B cell (primary cell): ENCODE measurements at regions of chrX and their contacts with region 1.

Region 1: DNA sequence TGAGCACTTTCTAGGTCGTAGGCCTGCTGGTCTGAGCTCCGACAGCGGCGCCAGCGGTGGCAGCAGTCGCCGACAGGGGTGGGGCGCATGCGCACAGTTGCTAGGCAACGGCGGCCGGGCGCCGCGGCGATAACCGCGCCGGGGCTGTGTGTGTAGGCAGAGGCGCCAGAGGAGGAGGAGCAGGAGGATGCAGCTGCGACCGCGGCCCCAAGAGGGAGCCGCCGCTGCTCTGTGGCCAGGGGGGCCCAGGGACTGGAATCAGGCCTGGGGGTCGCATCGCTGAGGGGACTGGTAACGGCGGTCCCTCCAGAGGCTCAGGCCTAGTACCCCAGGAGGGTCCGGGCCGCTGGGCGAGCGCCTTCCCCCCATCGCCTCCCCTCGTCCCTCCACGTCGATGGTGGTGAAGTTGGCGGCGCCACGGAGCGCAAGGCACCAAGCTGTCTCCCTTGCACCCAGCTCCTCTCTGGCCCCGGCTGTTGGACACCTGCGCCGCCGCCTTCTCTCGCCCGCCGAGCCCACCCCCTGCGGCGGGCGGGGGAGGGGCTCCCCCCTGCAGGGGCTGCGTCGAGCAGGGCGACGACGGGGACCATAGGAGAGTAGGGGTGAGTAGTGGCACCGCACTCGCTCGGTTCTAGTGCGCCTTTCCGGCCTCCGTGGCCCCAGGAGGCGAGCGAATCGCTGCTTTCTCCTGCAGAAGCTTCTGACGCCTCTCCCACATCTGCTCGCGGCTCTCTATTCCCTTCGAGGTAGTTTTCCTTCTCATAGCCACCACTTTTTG is 58.6 kb upstream of the ZC4H2 start:
- DNase-seq: peak; percentile 89
- ATAC-seq: peak; percentile 90
- H3K4me3 ChIP-seq: peak within 1 kb of the TSS; percentile 6 to 71 (median 68)
- H3K4me3 Mint-ChIP-seq: peak within 1 kb of the TSS; percentile 96
- H3K27ac ChIP-seq: peak within 1 kb of the TSS; percentile 73 to 85
- H3K27ac Mint-ChIP-seq: peak within 1 kb of the TSS; percentile 98
- H3K4me1 ChIP-seq: peaks cover 8 to 10% of the 10 kb centered on the region in 2 donors
- H3K4me1 Mint-ChIP-seq: peaks cover 24% of the 10 kb centered on the region
- H3K27me3 ChIP-seq: no peaks in the 10 kb centered on the region
- H3K27me3 Mint-ChIP-seq: no peaks in the 10 kb centered on the region
- CTCF ChIP-seq: peak; percentile 57

Region 2: DNA sequence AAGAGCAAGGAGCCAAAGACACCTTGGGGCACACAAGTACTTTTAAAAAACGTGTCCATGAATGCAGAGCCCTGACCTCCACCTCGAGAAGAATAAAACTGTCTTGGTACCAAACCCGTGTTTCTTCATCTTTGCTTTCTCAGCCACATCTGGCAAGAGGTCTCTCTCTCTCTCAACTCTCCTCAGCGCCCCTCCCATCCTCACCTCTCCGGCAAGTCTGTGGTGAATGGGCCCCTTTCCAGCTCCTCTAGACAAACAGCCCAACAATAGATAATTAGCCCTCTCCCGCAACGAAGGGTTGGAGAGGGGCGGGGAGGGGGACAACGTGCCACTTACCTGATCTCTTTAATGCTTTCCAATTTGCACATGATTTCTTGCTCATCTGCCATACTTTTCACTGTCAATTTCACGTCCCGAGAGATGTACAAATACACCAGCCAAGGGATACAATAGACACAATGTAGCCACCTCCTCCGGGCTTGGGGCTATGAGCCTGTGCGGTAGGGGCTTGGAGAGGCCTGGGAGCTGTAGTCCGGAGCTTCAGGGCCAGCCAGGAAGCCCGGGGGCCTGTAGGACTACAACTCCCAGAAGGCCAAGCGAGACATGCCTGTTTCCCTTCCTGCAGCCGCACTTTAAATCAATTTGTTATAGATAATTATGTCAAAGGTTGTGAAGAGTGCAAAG is 58.7 kb before region 1 on chrX and contains the start of gene ZC4H2:
- CTCF ChIA-PET with region 1: interaction called, 9 read pairs
- POLR2A ChIA-PET with region 1: no interaction called
- intact Hi-C with region 1: loop called (anchors 1 kb)
- DNase-seq: peak; percentile 74
- ATAC-seq: peak; percentile 96
- H3K4me3 ChIP-seq: peak within 1 kb of the TSS; percentile 39 to 64 (median 58)
- H3K4me3 Mint-ChIP-seq: peak within 1 kb of the TSS; percentile 92
- H3K27ac ChIP-seq: peak within 1 kb of the TSS in 1 of 2 donors; percentile 33
- H3K27ac Mint-ChIP-seq: peak within 1 kb of the TSS; percentile 64
- H3K4me1 ChIP-seq: peaks cover 4 to 5% of the 10 kb centered on the region in 2 donors
- H3K4me1 Mint-ChIP-seq: peaks cover 15% of the 10 kb centered on the region
- H3K27me3 ChIP-seq: no peaks in the 10 kb centered on the region
- H3K27me3 Mint-ChIP-seq: no peaks in the 10 kb centered on the region
- CTCF ChIP-seq: no peak
- total RNA-seq, gene ZC4H2: 10.9 and 14.1 TPM in 2 replicates

Region 3: DNA sequence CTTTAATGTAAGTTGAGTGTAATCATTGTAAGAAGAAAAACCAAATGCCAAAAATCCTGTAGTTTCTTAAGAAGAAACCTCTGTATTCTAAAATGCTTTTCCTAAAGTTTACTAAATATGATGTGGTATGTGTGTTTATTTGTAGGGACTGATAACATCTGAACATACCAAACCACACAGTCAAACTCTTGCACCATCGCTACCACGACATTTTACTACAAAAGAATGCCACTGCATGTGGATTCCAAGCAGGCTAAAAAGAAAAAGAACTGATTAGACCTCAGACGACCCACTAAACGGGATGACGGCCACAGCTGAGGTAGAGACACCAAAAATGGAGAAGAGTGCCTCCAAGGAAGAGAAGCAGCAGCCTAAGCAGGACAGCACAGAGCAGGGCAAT is 453.6 kb after region 1 on chrX:
- CTCF ChIA-PET with region 1: no interaction called
- POLR2A ChIA-PET with region 1: no interaction called
- intact Hi-C with region 1: no loop called
- DNase-seq: no peak
- ATAC-seq: no peak
- H3K4me3 ChIP-seq: no peak overlapping the region
- H3K4me3 Mint-ChIP-seq: no peak overlapping the region
- H3K27ac ChIP-seq: no peak overlapping the region
- H3K27ac Mint-ChIP-seq: no peak overlapping the region
- H3K4me1 ChIP-seq: no peaks in the 10 kb centered on the region
- H3K4me1 Mint-ChIP-seq: no peaks in the 10 kb centered on the region
- H3K27me3 ChIP-seq: no peaks in the 10 kb centered on the region
- H3K27me3 Mint-ChIP-seq: no peaks in the 10 kb centered on the region
- CTCF ChIP-seq: no peak